MCF 10A (cell line): ENCODE measurements at regions of chr9 and their contacts with region 1.

Region 1: DNA sequence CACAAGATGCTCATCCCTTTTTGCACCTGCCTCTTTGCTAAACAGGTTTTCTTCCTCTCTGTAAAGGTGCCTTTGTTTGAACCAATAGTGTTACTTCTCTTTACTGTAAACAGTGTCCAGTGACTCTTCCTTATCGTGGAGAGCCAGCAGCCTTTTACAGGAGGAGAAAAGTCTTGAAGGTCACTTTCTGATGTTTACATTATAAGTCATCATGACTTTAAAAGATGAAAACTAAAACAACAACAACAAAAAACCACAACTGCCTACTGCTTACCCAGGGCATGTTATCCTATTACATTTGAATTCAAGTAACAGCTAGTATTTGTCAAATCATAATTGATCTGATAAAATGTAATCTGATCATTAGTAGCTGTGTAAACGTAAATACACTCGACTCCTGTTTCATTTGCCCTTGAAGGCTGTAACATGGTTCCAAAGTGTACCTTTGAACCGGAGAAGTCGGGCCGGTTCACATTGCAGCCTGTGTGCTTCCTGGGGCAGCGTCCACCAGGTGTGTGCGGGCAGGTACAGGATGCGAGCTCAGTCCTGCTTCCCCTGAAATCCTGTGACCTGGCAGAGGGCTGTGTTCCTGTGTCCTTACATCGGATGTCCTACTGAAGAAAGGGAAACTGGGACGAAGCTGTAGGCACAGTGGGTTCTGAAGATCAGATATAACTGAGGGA is 118.1 kb downstream of the C9orf152 start:
- DNase-seq: no peak
- H3K4me3 Mint-ChIP-seq: no peak overlapping the region
- H3K27ac Mint-ChIP-seq: peak overlapping the region; percentile 35
- H3K4me1 Mint-ChIP-seq: peaks cover 36% of the 10 kb centered on the region
- H3K27me3 Mint-ChIP-seq: no peaks in the 10 kb centered on the region
- CTCF ChIP-seq: no peak

Region 2: GRCh38 chr9:109369285-109369684 is 720.5 kb before region 1 on chr9:
- CTCF ChIA-PET with region 1: no interaction called
- POLR2A ChIA-PET with region 1: no interaction called
- intact Hi-C with region 1: no loop called
- DNase-seq: peak; percentile 64
- H3K4me3 Mint-ChIP-seq: no peak overlapping the region
- H3K27ac Mint-ChIP-seq: no peak overlapping the region
- H3K4me1 Mint-ChIP-seq: peaks cover 6% of the 10 kb centered on the region
- H3K27me3 Mint-ChIP-seq: no peaks in the 10 kb centered on the region
- CTCF ChIP-seq: no peak

Region 3: GRCh38 chr9:110110154-110110553 is 20.3 kb after region 1 on chr9:
- CTCF ChIA-PET with region 1: no interaction called
- POLR2A ChIA-PET with region 1: interaction called, 11 read pairs
- intact Hi-C with region 1: no loop called
- DNase-seq: no peak
- H3K4me3 Mint-ChIP-seq: no peak overlapping the region
- H3K27ac Mint-ChIP-seq: no peak overlapping the region
- H3K4me1 Mint-ChIP-seq: peaks cover 15% of the 10 kb centered on the region
- H3K27me3 Mint-ChIP-seq: no peaks in the 10 kb centered on the region
- CTCF ChIP-seq: no peak

Region 4: GRCh38 chr9:110545705-110546104 is 455.9 kb after region 1 on chr9:
- CTCF ChIA-PET with region 1: no interaction called
- POLR2A ChIA-PET with region 1: no interaction called
- intact Hi-C with region 1: no loop called
- DNase-seq: no peak
- H3K4me3 Mint-ChIP-seq: no peak overlapping the region
- H3K27ac Mint-ChIP-seq: no peak overlapping the region
- H3K4me1 Mint-ChIP-seq: no peaks in the 10 kb centered on the region
- H3K27me3 Mint-ChIP-seq: no peaks in the 10 kb centered on the region
- CTCF ChIP-seq: no peak